ENCODE measurements at regions of chr10 and their contacts with region 1.

Region 1: GRCh38 chr10:21732067-21732772 is 198.2 kb downstream of the MLLT10 start:
- DNase-seq: peak; percentile 79
- ATAC-seq: peak; percentile 95
- H3K4me3 Mint-ChIP-seq: no peak overlapping the region
- H3K27ac Mint-ChIP-seq: peak overlapping the region; percentile 89
- H3K4me1 Mint-ChIP-seq: peaks cover 37% of the 10 kb centered on the region
- H3K27me3 Mint-ChIP-seq: no peaks in the 10 kb centered on the region
- CTCF ChIP-seq: peak; percentile 87

Region 2: GRCh38 chr10:21634599-21635365 is 97.4 kb before region 1 on chr10:
- CTCF ChIA-PET with region 1: interaction called, 10 read pairs
- POLR2A ChIA-PET with region 1: no interaction called
- DNase-seq: no peak
- ATAC-seq: no peak
- H3K4me3 Mint-ChIP-seq: no peak overlapping the region
- H3K27ac Mint-ChIP-seq: peak overlapping the region; percentile 79
- H3K4me1 Mint-ChIP-seq: peaks cover 54% of the 10 kb centered on the region
- H3K27me3 Mint-ChIP-seq: no peaks in the 10 kb centered on the region
- CTCF ChIP-seq: no peak

Region 3: GRCh38 chr10:21702633-21703111 is 29.5 kb before region 1 on chr10:
- CTCF ChIA-PET with region 1: no interaction called
- POLR2A ChIA-PET with region 1: no interaction called
- DNase-seq: no peak
- ATAC-seq: no peak
- H3K4me3 Mint-ChIP-seq: no peak overlapping the region
- H3K27ac Mint-ChIP-seq: peak overlapping the region; percentile 5; the same call in 1 of the 2 replicates
- H3K4me1 Mint-ChIP-seq: peaks cover 16% of the 10 kb centered on the region
- H3K27me3 Mint-ChIP-seq: no peaks in the 10 kb centered on the region
- CTCF ChIP-seq: no peak

Region 4: GRCh38 chr10:21953585-21954057 is 221.4 kb after region 1 on chr10:
- CTCF ChIA-PET with region 1: interaction called, 14 read pairs
- POLR2A ChIA-PET with region 1: no interaction called
- DNase-seq: no peak
- ATAC-seq: peak; percentile 34; the same call in 1 of the 2 replicates
- H3K4me3 Mint-ChIP-seq: no peak overlapping the region
- H3K27ac Mint-ChIP-seq: no peak overlapping the region
- H3K4me1 Mint-ChIP-seq: peaks cover 18% of the 10 kb centered on the region
- H3K27me3 Mint-ChIP-seq: no peaks in the 10 kb centered on the region
- CTCF ChIP-seq: no peak